ENCODE measurements at regions of chr12 and their contacts with region 1.

Region 1: GRCh38 chr12:92928962-92929915 is at the start of gene EEA1:
- DNase-seq: peak; percentile 99
- total RNA-seq, gene EEA1: 34.1 TPM

Region 2: GRCh38 chr12:92784795-92785562 is 144.3 kb before region 1 on chr12:
- intact Hi-C with region 1: loop called (anchors 5 kb)
- DNase-seq: no peak